ENCODE measurements at regions of chr14 and their contacts with region 1.

Region 1: DNA sequence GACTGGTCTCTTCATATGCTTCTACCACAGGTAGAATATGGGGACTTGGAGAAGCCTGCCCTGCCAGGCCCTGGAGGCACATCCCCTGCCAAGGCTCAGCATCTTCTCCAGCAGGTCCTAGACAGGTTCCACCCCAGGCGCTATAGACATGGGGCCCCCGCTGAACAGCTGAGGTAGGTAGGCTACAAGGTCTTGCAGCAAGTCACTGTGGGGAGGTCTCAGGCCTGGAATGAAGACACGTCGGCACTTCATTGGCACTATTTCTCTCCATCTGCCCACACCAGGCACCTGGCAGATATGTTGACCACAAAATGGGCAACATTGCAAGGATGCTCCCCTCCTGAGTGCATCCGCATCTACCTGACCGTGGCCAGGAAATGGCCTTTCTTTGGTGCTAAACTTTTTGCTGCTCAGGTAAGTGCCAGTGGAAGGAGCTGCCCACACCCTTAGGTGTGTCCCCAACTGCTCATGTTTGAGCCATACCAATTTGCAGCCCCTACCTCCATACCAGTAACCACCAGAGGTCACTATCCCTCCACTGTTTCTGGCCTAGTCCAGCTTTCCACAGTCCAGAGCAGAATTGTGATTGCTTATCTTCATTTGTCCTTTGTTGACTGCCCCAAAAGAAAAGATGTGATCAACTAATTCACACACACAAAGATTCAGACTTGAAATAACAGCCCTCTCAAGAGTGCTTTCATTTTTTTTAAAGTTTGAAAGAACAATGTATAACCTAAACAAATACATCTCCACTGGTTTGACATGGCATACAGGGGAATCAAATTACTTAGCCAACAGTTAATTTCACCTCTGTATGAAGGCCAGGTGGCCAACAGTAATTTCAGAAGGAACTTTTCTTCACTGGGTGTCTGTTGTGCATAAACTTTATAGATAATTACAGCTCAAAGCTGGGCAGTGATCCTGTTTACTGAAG is 16.1 kb downstream of the PIGH start:
- DNase-seq: peak; percentile 76
- ATAC-seq: peak; percentile 80
- H3K4me3 ChIP-seq: no peak overlapping the region
- H3K4me3 Mint-ChIP-seq: no peak overlapping the region
- H3K27ac ChIP-seq: no peak overlapping the region
- H3K27ac Mint-ChIP-seq: no peak overlapping the region
- H3K4me1 ChIP-seq: no peaks in the 10 kb centered on the region
- H3K4me1 Mint-ChIP-seq: peaks cover 6% of the 10 kb centered on the region
- H3K27me3 ChIP-seq: no peaks in the 10 kb centered on the region
- H3K27me3 Mint-ChIP-seq: no peaks in the 10 kb centered on the region
- CTCF ChIP-seq: peak; percentile 85

Region 2: DNA sequence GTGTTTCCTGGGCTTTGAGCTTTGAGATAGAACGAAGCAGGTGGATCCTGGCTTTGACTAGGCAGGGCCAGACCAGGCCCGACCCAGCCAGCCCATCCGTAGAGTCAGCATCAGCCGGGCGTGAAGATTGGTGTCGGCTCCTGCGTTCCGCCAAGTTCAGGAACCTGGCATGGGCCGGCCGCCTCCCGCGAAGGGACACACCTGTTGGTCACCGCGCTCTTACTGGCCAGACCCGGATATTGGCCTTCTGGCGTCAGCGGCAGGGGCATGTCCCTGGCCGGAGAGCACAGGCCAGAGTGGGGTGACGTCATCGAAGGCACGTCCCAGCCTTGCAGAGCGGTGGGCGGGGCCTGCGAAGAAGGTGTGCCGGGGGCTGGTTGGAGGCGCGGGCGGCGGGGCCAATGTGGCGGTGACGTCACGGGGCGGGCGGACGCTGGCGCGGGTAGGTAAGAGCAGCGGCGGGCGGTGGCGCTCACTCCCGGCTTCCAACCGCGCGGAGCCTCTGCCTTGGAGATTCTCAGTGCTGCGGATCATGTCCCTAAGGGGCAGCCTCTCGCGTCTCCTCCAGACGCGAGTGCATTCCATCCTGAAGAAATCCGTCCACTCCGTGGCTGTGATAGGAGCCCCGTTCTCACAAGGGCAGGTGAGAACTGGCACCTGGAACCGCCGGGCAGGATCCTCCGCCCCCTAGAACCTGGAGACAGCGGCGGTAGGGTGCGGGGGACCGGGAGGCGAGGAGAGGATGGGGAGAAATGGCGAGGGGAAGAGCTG is 35.7 kb after region 1 on chr14 and contains the start of gene ARG2:
- CTCF ChIA-PET with region 1: interaction called, 9 read pairs
- POLR2A ChIA-PET with region 1: no interaction called
- intact Hi-C with region 1: loop called (anchors 1 kb)
- DNase-seq: peak; percentile 98
- ATAC-seq: peak; percentile 94
- H3K4me3 ChIP-seq: peak within 1 kb of the TSS; percentile 57 to 94 (median 81)
- H3K4me3 Mint-ChIP-seq: peak within 1 kb of the TSS; percentile 92
- H3K27ac ChIP-seq: peak within 1 kb of the TSS; percentile 76 to 78
- H3K27ac Mint-ChIP-seq: peak within 1 kb of the TSS; percentile 94
- H3K4me1 ChIP-seq: peaks cover 12 to 18% of the 10 kb centered on the region in 2 donors
- H3K4me1 Mint-ChIP-seq: peaks cover 23% of the 10 kb centered on the region
- H3K27me3 ChIP-seq: peaks cover 0 to 4% (median 0%) of the 10 kb centered on the region in 4 experiments
- H3K27me3 Mint-ChIP-seq: no peaks in the 10 kb centered on the region
- CTCF ChIP-seq: no peak
- total RNA-seq, gene ARG2: 1.8 and 2.0 TPM in 2 replicates

Region 3: DNA sequence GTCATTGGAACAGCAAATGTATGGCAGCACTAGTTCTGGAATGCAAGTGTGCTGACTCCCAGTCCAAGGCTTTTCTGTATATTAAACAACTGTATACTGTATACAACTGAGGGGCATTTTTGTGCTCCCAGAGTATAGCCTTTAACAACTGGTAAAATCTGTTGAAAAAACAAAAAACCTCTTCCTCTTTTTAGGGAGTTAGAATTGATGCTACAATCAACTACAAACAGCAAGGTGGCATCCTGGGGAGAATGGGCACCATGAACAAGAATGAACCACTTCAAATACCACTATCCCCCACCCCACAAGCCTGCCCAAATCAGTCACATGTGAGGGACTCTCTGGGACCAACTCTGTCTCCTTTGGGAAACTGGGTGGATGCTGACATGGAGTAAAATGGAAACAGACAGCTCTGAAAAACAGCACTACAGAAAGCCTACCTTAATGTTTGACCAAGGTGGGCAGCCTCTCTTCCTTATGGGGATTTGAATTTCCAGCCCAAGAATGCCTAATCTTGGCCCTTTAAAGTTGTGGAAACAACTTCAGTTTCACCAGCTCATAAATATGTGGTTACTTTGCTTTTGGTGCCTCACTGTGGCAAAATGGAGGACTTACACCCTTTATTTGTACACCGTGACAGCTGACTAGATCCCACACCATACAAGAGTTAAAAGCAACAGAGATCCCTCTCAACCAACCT is 82.9 kb after region 1 on chr14:
- CTCF ChIA-PET with region 1: interaction called, 243 read pairs
- POLR2A ChIA-PET with region 1: no interaction called
- intact Hi-C with region 1: loop called (anchors 1 kb)
- DNase-seq: peak; percentile 74
- ATAC-seq: peak; percentile 75
- H3K4me3 ChIP-seq: no peak overlapping the region
- H3K4me3 Mint-ChIP-seq: peak overlapping the region; percentile 60
- H3K27ac ChIP-seq: peak overlapping the region; percentile 45 to 74
- H3K27ac Mint-ChIP-seq: peak overlapping the region; percentile 78
- H3K4me1 ChIP-seq: peaks cover 22 to 23% of the 10 kb centered on the region in 2 donors
- H3K4me1 Mint-ChIP-seq: peaks cover 51% of the 10 kb centered on the region
- H3K27me3 ChIP-seq: no peaks in the 10 kb centered on the region
- H3K27me3 Mint-ChIP-seq: no peaks in the 10 kb centered on the region
- CTCF ChIP-seq: peak; percentile 80

Region 4: DNA sequence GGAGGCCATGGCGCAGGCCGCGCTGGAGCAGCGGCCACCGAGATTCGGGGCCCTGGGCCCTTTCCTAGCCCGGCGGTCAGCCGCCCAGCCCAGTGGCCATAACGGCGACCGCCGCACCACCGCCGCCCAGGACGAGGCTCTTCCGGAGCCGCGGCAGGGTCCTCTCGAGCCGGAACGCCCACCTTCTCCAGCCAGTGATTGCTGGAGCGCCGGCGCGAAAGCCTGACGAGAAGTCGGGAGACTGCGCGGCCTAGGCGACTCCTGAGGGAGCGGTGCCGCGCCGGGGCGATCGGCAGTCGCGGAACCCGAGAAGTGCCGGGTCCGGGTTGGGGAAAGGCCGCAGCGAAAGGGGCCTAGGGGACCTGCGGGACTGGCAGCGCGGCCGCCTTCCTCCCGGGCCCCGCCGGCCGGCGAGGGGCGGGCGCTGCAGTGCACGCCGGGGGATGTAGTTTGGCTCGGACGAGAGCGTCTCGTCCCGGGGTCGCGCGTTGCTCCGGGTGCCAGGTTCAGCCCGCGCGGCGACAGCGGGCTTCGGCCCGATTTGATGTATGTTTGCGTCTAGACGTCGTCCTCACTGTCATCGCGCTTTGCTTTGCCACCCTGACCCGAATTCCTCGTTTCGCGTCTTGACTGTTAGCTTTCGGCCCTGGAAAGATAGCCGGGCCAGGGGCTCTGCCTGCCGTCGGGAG is 90.6 kb after region 1 on chr14 and contains the start of gene VTI1B:
- CTCF ChIA-PET with region 1: interaction called, 243 read pairs
- POLR2A ChIA-PET with region 1: no interaction called
- intact Hi-C with region 1: no loop called
- DNase-seq: peak; percentile 94
- ATAC-seq: peak; percentile 92
- H3K4me3 ChIP-seq: peak within 1 kb of the TSS; percentile 71 to 97 (median 87)
- H3K4me3 Mint-ChIP-seq: peak within 1 kb of the TSS; percentile 86
- H3K27ac ChIP-seq: peak within 1 kb of the TSS; percentile 96 to 99
- H3K27ac Mint-ChIP-seq: peak within 1 kb of the TSS; percentile 95
- H3K4me1 ChIP-seq: peaks cover 19 to 22% of the 10 kb centered on the region in 2 donors
- H3K4me1 Mint-ChIP-seq: peaks cover 30% of the 10 kb centered on the region
- H3K27me3 ChIP-seq: no peaks in the 10 kb centered on the region
- H3K27me3 Mint-ChIP-seq: no peaks in the 10 kb centered on the region
- CTCF ChIP-seq: no peak
- total RNA-seq, gene VTI1B: 58.8 and 58.9 TPM in 2 replicates

Region 5: GRCh38 chr14:67837011-67837624 is 253.1 kb after region 1 on chr14:
- CTCF ChIA-PET with region 1: interaction called, 13 read pairs
- POLR2A ChIA-PET with region 1: no interaction called
- intact Hi-C with region 1: no loop called
- DNase-seq: peak; percentile 83
- ATAC-seq: peak; percentile 64
- H3K4me3 ChIP-seq: no peak overlapping the region
- H3K4me3 Mint-ChIP-seq: no peak overlapping the region
- H3K27ac ChIP-seq: no peak overlapping the region
- H3K27ac Mint-ChIP-seq: no peak overlapping the region
- H3K4me1 ChIP-seq: no peaks in the 10 kb centered on the region
- H3K4me1 Mint-ChIP-seq: no peaks in the 10 kb centered on the region
- H3K27me3 ChIP-seq: no peaks in the 10 kb centered on the region
- H3K27me3 Mint-ChIP-seq: no peaks in the 10 kb centered on the region
- CTCF ChIP-seq: peak; percentile 72